ENCODE measurements at regions of chr1 and their contacts with region 1.

Region 1: GRCh38 chr1:145845514-145846161 is at the start of gene NUDT17:
- H3K4me3 ChIP-seq: peak within 1 kb of the TSS; percentile 60
- H3K27ac ChIP-seq: peak within 1 kb of the TSS; percentile 40; the same call in 1 of the 2 replicates
- H3K4me1 ChIP-seq: 0 out of 2 replicates have a peak, but pooled peaks cover 3% of the 10 kb centered on the region
- CTCF ChIP-seq: peak; percentile 96

Region 2: DNA sequence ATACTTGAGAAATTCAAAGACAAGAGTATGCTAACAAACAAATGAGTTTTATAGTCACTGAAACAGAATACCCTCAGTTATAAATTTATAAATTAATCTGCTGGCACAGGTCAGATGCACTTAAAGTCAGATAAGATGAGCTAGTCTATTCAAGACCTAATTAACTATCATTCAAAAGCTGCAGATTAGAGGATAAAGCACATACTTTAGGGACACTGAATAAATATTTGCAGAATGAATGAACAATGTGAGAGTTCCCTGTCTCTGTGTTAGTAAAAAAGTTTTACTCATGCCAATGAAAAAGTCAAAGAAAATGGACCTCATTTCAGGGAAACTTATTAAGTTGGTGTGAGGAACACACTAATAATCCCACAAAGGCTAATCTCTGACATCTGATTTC is 80.1 kb before region 1 on chr1:
- CTCF ChIA-PET with region 1: no interaction called
- POLR2A ChIA-PET with region 1: no interaction called
- H3K4me3 ChIP-seq: no peak overlapping the region
- H3K27ac ChIP-seq: no peak overlapping the region
- H3K4me1 ChIP-seq: peaks cover 4% of the 10 kb centered on the region; the same call in 1 of the 2 replicates
- CTCF ChIP-seq: no peak

Region 3: DNA sequence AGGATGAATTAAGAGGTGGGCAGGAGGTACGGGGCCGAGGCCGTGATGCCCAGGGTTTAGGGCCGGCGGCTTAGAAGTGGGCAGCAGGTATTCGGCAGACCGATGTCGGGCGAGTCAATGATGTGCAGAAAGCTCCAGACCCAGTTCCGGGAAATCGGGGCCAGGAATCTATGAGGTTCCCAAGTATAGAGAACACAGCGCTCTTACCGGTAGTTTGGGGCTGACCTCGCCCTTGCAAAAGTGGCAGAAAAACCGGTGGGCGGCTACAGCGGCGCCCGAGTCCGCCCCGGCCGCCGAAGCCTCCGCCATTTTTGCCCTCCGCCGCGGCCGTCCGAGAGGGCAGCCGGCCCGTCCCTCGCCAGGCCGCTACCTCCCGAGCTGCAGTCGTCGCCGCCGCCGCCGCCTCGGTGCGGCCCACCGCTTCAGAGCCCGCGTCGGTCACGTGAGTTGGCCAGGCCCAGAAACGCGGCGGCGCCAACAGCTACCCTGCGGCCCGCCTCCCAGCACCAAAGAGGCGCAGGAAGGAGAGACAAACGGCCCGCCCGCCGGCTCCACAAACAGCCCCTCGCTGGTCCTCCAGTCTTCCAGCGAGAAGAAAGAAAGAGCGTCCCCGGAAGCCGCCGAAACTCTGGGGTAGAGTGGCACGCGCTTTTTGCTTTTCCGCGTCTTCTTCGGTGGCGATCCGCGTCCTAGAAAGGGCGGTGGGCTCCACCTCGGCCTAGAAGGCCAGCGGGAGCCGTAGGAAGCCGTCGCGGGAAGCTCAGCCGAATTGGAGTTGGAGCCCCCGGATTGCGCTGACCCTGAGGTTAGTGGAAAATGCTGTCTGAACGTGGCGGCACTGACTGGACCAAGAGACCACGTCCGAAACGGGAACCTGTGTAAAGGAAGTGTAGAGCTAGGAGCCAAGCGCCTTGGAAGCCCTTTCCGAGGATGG is 21.8 kb before region 1 on chr1 and contains the starts of genes POLR3C and RNF115:
- CTCF ChIA-PET with region 1: interaction called, 112 read pairs
- POLR2A ChIA-PET with region 1: interaction called, 7 read pairs
- H3K4me3 ChIP-seq: peak within 1 kb of the TSS; percentile 92
- H3K27ac ChIP-seq: peak within 1 kb of the TSS; percentile 81
- H3K4me1 ChIP-seq: no peaks in the 10 kb centered on the region
- CTCF ChIP-seq: peak; percentile 17; the same call in 1 of the 2 replicates

Region 4: GRCh38 chr1:145879775-145880174 is 34.1 kb after region 1 on chr1:
- CTCF ChIA-PET with region 1: interaction called, 17 read pairs
- POLR2A ChIA-PET with region 1: interaction called, 3 read pairs
- H3K4me3 ChIP-seq: no peak overlapping the region
- H3K27ac ChIP-seq: no peak overlapping the region
- H3K4me1 ChIP-seq: no peaks in the 10 kb centered on the region
- CTCF ChIP-seq: no peak

Region 5: DNA sequence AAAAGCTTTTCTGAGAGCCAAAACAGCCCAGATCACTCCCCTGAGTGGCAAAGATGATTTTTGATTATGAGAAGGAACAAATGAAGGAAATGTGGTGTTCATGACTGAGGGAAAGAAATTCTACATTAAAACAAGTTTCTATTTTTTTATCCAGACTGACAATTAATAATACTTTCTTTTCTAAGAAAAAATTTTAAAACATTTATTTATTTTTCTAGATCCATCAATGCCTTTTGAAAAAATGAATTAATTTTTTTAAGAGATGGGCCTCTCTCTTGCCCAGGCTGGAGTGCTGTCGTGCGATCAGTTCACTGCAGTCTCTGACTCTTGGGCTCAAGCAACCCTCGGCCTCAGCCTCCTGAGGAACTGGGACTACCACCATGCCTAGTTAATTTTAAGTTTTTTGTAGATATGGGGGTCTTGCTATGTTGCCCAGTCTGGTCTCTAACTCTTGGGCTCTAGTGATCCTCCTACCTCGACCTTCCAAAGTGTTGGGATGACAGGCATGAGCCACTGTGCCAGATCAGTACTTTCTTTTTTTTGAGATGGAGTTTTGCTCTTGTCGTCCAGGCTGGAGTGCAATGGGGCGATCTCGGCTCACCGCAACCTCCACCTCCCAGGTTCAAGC is 162.0 kb after region 1 on chr1:
- CTCF ChIA-PET with region 1: interaction called, 57 read pairs
- POLR2A ChIA-PET with region 1: interaction called, 3 read pairs
- H3K4me3 ChIP-seq: no peak overlapping the region
- H3K27ac ChIP-seq: no peak overlapping the region
- H3K4me1 ChIP-seq: no peaks in the 10 kb centered on the region
- CTCF ChIP-seq: no peak

Region 6: DNA sequence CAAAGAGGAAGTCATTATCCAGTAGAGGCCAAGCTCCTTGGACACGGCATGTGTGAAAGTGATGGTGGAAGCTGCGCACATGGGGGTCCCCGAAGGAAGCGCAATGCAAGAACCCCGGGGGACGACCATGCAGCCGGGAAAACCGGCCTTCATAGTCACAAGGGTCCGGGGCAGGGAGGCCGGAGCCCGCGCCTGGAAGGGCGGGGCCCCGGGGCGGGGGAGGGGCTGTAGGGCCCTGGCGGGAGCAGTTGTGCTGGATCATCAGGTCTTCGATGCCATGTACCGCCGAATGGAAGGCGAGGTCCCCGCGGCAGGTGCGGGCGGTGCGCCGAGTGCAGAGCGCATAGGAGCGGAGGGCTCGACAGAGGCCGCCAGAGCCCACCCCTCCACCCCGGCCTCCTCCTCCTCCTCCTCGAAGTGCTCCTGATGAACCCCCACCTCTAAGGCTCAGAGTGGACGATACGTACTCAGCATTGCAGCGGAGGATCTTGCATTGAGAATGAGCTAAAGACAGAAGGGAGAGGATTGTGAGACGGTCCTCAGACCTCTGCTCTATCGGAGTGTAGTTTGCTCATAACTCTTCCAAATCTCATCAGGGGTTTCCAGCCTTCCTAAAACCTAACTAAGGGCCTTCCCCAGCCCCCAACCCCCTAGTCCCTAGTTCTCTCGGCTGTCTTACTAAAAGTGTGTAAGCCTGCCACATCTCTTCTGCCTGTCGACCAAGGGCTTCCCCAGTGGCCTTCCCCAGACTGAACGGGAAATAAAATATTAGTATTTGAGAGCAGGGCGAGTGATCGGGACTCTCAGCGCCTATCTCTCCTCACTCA is 173.8 kb after region 1 on chr1:
- CTCF ChIA-PET with region 1: interaction called, 57 read pairs
- POLR2A ChIA-PET with region 1: no interaction called
- H3K4me3 ChIP-seq: no peak overlapping the region
- H3K27ac ChIP-seq: no peak overlapping the region
- H3K4me1 ChIP-seq: no peaks in the 10 kb centered on the region
- CTCF ChIP-seq: no peak

Measured in HEK293 (cell line).